ENCODE measurements at regions of chr17 and their contacts with region 1.

Region 1: GRCh38 chr17:68057531-68057952 is 22.0 kb downstream of the KPNA2 start:
- DNase-seq: no peak
- H3K4me3 ChIP-seq: no peak overlapping the region
- H3K27ac ChIP-seq: no peak overlapping the region
- H3K4me1 ChIP-seq: no peaks in the 10 kb centered on the region
- H3K27me3 ChIP-seq: peaks cover 3% of the 10 kb centered on the region
- CTCF ChIP-seq: peak; percentile 29 to 47

Region 2: GRCh38 chr17:68122587-68122986 is 65.0 kb after region 1 on chr17:
- CTCF ChIA-PET with region 1: no interaction called
- dilution Hi-C with region 1: loop called (anchors 5 kb)
- in situ Hi-C with region 1: no loop called
- intact Hi-C with region 1: no loop called
- DNase-seq: no peak
- H3K4me3 ChIP-seq: no peak overlapping the region
- H3K27ac ChIP-seq: no peak overlapping the region
- H3K4me1 ChIP-seq: no peaks in the 10 kb centered on the region
- H3K27me3 ChIP-seq: no peaks in the 10 kb centered on the region
- CTCF ChIP-seq: no peak

Region 3: GRCh38 chr17:68172461-68172954 is 115.0 kb after region 1 on chr17:
- CTCF ChIA-PET with region 1: no interaction called
- dilution Hi-C with region 1: no loop called
- in situ Hi-C with region 1: no loop called
- intact Hi-C with region 1: no loop called
- DNase-seq: peak; percentile 35
- H3K4me3 ChIP-seq: no peak overlapping the region
- H3K27ac ChIP-seq: no peak overlapping the region
- H3K4me1 ChIP-seq: no peaks in the 10 kb centered on the region
- H3K27me3 ChIP-seq: no peaks in the 10 kb centered on the region
- CTCF ChIP-seq: peak; percentile 94 to 96

Region 4: GRCh38 chr17:68184816-68185436 is 127.4 kb after region 1 on chr17:
- CTCF ChIA-PET with region 1: no interaction called
- dilution Hi-C with region 1: no loop called
- in situ Hi-C with region 1: no loop called
- intact Hi-C with region 1: no loop called
- DNase-seq: no peak
- H3K4me3 ChIP-seq: no peak overlapping the region
- H3K27ac ChIP-seq: no peak overlapping the region
- H3K4me1 ChIP-seq: peaks cover 18% of the 10 kb centered on the region
- H3K27me3 ChIP-seq: no peaks in the 10 kb centered on the region
- CTCF ChIP-seq: no peak

Region 5: DNA sequence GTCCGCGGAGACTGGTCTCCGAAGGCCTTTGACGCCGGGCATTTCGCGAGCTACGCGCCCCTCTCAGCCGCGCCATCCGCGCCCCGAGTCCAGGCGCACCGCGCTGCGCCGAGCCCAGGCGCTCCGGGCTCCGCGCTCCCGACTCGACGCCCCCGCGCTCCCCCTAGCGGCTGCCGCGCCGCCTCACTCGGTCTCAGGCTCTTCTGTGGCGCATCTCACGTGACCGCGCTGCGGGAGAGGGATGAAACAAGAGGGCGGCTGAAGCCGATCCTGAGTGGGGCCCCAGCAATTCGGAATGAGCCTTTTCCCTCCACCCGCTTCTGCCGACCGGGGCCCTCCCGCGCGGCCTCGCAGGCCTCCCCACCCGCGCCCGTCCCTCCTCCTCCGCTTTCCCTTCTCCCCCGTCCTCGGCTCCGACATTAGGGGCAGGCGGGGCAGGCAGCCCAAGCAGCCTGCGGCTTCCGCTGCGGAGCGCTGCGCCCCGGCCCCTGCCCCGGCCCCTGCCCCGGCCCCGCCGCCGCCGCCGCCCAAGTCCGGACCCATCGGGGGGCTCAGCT is 147.8 kb after region 1 on chr17:
- CTCF ChIA-PET with region 1: no interaction called
- dilution Hi-C with region 1: no loop called
- in situ Hi-C with region 1: no loop called
- intact Hi-C with region 1: loop called (anchors 2 kb)
- DNase-seq: peak; percentile 76
- H3K4me3 ChIP-seq: peak overlapping the region; percentile 73 to 93 (median 82)
- H3K27ac ChIP-seq: peak overlapping the region; percentile 29
- H3K4me1 ChIP-seq: peaks cover 13% of the 10 kb centered on the region
- H3K27me3 ChIP-seq: no peaks in the 10 kb centered on the region
- CTCF ChIP-seq: peak; percentile 66 to 80

Measured in mammary epithelial cell (primary cell).